ENCODE measurements at regions of chr2 and their contacts with region 1.

Region 1: DNA sequence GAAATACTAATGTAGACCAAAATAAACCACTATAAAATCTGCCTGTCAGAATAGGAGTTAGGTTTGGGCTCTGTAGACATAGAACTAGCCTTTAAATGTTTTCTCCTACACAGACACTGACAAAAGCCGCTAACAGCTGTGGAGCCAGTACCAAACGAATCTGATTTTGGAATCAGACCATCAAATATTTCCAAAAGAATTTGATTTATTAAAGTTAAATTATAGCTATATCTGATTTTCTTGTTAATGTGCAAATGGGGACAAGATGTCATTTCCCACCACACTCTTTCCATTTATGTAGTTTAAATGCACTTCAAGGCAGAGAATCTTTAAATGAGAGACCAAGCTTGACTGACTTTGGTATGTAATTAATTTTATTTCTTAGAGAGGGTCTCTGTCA is 343.4 kb upstream of the FIGN start:
- DNase-seq: no peak
- H3K4me3 ChIP-seq: no peak overlapping the region
- H3K27ac ChIP-seq: no peak overlapping the region
- H3K4me1 ChIP-seq: no peaks in the 10 kb centered on the region
- H3K27me3 ChIP-seq: peaks cover 4% of the 10 kb centered on the region
- CTCF ChIP-seq: no peak

Region 2: DNA sequence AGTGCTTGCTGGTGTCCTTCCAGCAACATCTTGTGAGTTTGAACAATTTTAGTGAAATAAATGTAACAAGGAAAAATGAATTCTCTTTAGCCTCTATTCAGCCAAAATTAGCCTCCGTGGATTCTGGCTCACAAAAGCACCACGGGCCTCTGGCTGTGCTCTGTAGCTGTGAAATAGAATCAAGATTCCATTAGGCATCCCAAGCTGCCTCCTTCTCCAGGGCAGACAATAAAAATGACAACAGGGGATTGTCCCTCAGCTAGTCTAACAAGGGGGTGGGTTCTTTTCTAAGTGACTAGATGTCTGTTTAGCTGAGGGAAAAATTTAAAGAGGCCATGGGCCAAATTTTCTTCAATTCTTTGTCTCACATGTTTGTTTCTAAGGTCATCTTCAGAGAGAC is 88.7 kb before region 1 on chr2:
- CTCF ChIA-PET with region 1: no interaction called
- dilution Hi-C with region 1: no loop called
- in situ Hi-C with region 1: no loop called
- intact Hi-C with region 1: no loop called
- DNase-seq: no peak
- H3K4me3 ChIP-seq: no peak overlapping the region
- H3K27ac ChIP-seq: no peak overlapping the region
- H3K4me1 ChIP-seq: no peaks in the 10 kb centered on the region
- H3K27me3 ChIP-seq: no peaks in the 10 kb centered on the region
- CTCF ChIP-seq: no peak

Region 3: GRCh38 chr2:164126960-164127637 is 47.8 kb after region 1 on chr2:
- CTCF ChIA-PET with region 1: no interaction called
- dilution Hi-C with region 1: loop called (anchors 5 kb)
- in situ Hi-C with region 1: no loop called
- intact Hi-C with region 1: no loop called
- DNase-seq: no peak
- H3K4me3 ChIP-seq: no peak overlapping the region
- H3K27ac ChIP-seq: no peak overlapping the region
- H3K4me1 ChIP-seq: no peaks in the 10 kb centered on the region
- H3K27me3 ChIP-seq: no peaks in the 10 kb centered on the region
- CTCF ChIP-seq: peak in 1 of 2 donors; percentile 27

Region 4: DNA sequence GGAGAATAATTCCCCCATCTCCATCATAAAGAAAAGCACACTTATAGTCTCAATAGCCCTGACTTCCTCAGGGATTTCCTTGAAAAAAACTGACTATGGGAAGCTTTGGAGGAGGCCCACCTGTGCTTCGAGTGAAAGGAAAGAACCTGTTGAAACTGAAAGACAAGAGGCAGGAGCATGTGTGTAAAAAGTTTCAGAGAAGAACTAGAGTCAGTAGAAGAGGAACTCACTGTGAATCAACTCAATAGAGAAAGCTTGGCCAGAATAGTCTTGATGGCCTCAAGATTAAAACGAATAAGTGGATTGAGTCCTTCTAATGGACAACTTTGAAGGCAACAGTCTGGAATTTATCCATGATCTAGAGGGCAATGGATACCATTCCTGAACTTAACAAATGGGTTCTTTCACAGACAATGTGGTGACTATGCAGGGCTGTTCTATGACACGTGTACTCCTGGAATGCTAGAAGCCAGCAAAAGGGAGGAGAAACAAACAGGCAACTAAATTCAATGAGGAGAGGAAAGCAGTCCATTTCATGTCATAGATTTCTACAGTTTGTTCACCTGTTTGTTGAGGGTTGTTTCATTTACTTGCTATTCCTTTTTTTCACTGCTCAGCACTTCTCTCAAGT is 99.7 kb after region 1 on chr2:
- CTCF ChIA-PET with region 1: no interaction called
- dilution Hi-C with region 1: no loop called
- in situ Hi-C with region 1: no loop called
- intact Hi-C with region 1: no loop called
- DNase-seq: peak; percentile 32
- H3K4me3 ChIP-seq: no peak overlapping the region
- H3K27ac ChIP-seq: no peak overlapping the region
- H3K4me1 ChIP-seq: no peaks in the 10 kb centered on the region
- H3K27me3 ChIP-seq: no peaks in the 10 kb centered on the region
- CTCF ChIP-seq: no peak

Region 5: GRCh38 chr2:164242409-164242808 is 163.2 kb after region 1 on chr2:
- CTCF ChIA-PET with region 1: no interaction called
- dilution Hi-C with region 1: no loop called
- in situ Hi-C with region 1: no loop called
- intact Hi-C with region 1: no loop called
- DNase-seq: no peak
- H3K4me3 ChIP-seq: no peak overlapping the region
- H3K27ac ChIP-seq: no peak overlapping the region
- H3K4me1 ChIP-seq: no peaks in the 10 kb centered on the region
- H3K27me3 ChIP-seq: peaks cover 1% of the 10 kb centered on the region
- CTCF ChIP-seq: no peak